GM12878 (cell line): ENCODE measurements at regions of chr22 and their contacts with region 1.

Region 1: DNA sequence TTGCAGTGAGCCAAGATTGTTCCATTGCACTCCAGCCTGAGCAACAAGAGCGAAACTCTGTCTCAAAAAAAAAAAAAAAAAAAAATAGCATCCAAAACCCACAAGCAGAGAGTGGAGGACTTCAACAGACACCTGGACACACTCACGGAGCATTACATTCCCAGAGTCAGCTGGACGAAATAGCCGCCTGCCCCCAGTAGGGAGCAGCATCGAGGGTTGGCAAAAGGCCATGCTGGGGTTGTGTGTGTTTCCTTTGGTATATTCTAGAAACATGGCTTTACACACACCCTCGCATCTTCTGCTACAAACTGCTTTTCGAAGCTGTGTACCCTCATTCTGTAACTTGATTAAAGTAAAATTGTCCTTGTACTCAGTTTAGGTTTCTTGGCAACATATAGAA is 5.3 kb downstream of the ADA2 start:
- DNase-seq: no peak
- ATAC-seq: no peak
- H3K4me3 ChIP-seq: no peak overlapping the region
- H3K27ac ChIP-seq: no peak overlapping the region
- H3K4me1 ChIP-seq: peaks cover 19% of the 10 kb centered on the region
- H3K27me3 ChIP-seq: no peaks in the 10 kb centered on the region
- CTCF ChIP-seq: peak; percentile 35 to 59 (median 42)
- EP300 ChIP-seq: no peak
- POLR2A ChIP-seq: no peak
- RAD21 ChIP-seq: peak; percentile 43; the same call in 1 of the 2 replicates

Region 2: GRCh38 chr22:17228725-17229126 is 14.8 kb after region 1 on chr22:
- CTCF ChIA-PET with region 1: interaction called, 3 read pairs
- POLR2A ChIA-PET with region 1: interaction called, 15 read pairs
- RAD21 ChIA-PET with region 1: interaction called, 3 read pairs
- SMC1A ChIA-PET with region 1: interaction called, 19 read pairs
- in situ Hi-C with region 1: no loop called
- intact Hi-C with region 1: no loop called
- DNase-seq: no peak
- ATAC-seq: peak; percentile 72
- H3K4me3 ChIP-seq: no peak overlapping the region
- H3K27ac ChIP-seq: no peak overlapping the region
- H3K4me1 ChIP-seq: peaks cover 4% of the 10 kb centered on the region; the same call in 1 of the 2 replicates
- H3K27me3 ChIP-seq: no peaks in the 10 kb centered on the region
- CTCF ChIP-seq: no peak
- EP300 ChIP-seq: no peak
- POLR2A ChIP-seq: no peak
- RAD21 ChIP-seq: no peak

Region 3: GRCh38 chr22:17237038-17237668 is 23.2 kb after region 1 on chr22:
- CTCF ChIA-PET with region 1: interaction called, 9 read pairs
- POLR2A ChIA-PET with region 1: no interaction called
- RAD21 ChIA-PET with region 1: interaction called, 7 read pairs
- SMC1A ChIA-PET with region 1: interaction called, 23 read pairs
- in situ Hi-C with region 1: no loop called
- intact Hi-C with region 1: loop called (anchors 2 kb)
- DNase-seq: peak; percentile 71
- ATAC-seq: peak; percentile 92
- H3K4me3 ChIP-seq: peak overlapping the region; percentile 57
- H3K27ac ChIP-seq: peak overlapping the region; percentile 83
- H3K4me1 ChIP-seq: peaks cover 22% of the 10 kb centered on the region
- H3K27me3 ChIP-seq: no peaks in the 10 kb centered on the region
- CTCF ChIP-seq: no peak
- EP300 ChIP-seq: peak; percentile 31 to 55; a peak in 2 of 4 replicates
- POLR2A ChIP-seq: no peak; the same call in 1 of the 2 replicates
- RAD21 ChIP-seq: no peak

Region 4: DNA sequence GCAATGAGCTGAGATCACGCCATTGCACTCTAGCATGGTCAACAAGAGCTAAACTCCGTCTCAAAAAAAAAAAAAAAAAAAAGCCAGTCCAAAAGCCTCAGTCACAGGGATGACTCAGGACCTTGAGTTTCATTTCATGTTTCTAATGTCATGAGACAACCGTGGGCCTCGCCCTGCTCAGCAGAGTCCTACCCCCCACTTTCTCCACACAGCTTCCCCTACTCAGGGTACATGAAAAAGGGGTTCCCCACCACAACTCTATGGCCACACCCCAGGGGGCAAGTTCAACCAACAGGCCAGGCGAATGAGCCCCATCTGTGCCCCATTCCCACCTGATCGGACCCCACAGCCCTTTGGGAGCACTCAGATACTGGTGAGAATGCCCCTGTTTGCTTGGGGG is 29.5 kb after region 1 on chr22:
- CTCF ChIA-PET with region 1: interaction called, 6 read pairs
- POLR2A ChIA-PET with region 1: interaction called, 4 read pairs
- RAD21 ChIA-PET with region 1: interaction called, 11 read pairs
- SMC1A ChIA-PET with region 1: interaction called, 23 read pairs
- in situ Hi-C with region 1: no loop called
- intact Hi-C with region 1: loop called (anchors 2 kb)
- DNase-seq: peak; percentile 84
- ATAC-seq: peak; percentile 97
- H3K4me3 ChIP-seq: no peak overlapping the region
- H3K27ac ChIP-seq: peak overlapping the region; percentile 97
- H3K4me1 ChIP-seq: peaks cover 24% of the 10 kb centered on the region
- H3K27me3 ChIP-seq: no peaks in the 10 kb centered on the region
- CTCF ChIP-seq: no peak
- EP300 ChIP-seq: peak in 1 of 2 experiments; percentile 66; a peak in 2 of 4 replicates
- POLR2A ChIP-seq: 0 out of 2 replicates have a peak, but pooled peaks have one; percentile 34
- RAD21 ChIP-seq: no peak

Region 5: GRCh38 chr22:17258015-17258787 is 44.2 kb after region 1 on chr22:
- CTCF ChIA-PET with region 1: interaction called, 6 read pairs
- POLR2A ChIA-PET with region 1: interaction called, 22 read pairs
- RAD21 ChIA-PET with region 1: interaction called, 27 read pairs
- SMC1A ChIA-PET with region 1: interaction called, 25 read pairs
- in situ Hi-C with region 1: no loop called
- intact Hi-C with region 1: loop called (anchors 1 kb)
- DNase-seq: peak; percentile 98
- ATAC-seq: peak; percentile 96
- H3K4me3 ChIP-seq: 0 out of 2 replicates have a peak overlapping the region, but pooled peaks have one; percentile 28
- H3K27ac ChIP-seq: peak overlapping the region; percentile 81
- H3K4me1 ChIP-seq: peaks cover 24% of the 10 kb centered on the region
- H3K27me3 ChIP-seq: no peaks in the 10 kb centered on the region
- CTCF ChIP-seq: no peak
- EP300 ChIP-seq: peak; percentile 83 to 92
- POLR2A ChIP-seq: no peak
- RAD21 ChIP-seq: peak; percentile 6; the same call in 1 of the 2 replicates

Region 6: DNA sequence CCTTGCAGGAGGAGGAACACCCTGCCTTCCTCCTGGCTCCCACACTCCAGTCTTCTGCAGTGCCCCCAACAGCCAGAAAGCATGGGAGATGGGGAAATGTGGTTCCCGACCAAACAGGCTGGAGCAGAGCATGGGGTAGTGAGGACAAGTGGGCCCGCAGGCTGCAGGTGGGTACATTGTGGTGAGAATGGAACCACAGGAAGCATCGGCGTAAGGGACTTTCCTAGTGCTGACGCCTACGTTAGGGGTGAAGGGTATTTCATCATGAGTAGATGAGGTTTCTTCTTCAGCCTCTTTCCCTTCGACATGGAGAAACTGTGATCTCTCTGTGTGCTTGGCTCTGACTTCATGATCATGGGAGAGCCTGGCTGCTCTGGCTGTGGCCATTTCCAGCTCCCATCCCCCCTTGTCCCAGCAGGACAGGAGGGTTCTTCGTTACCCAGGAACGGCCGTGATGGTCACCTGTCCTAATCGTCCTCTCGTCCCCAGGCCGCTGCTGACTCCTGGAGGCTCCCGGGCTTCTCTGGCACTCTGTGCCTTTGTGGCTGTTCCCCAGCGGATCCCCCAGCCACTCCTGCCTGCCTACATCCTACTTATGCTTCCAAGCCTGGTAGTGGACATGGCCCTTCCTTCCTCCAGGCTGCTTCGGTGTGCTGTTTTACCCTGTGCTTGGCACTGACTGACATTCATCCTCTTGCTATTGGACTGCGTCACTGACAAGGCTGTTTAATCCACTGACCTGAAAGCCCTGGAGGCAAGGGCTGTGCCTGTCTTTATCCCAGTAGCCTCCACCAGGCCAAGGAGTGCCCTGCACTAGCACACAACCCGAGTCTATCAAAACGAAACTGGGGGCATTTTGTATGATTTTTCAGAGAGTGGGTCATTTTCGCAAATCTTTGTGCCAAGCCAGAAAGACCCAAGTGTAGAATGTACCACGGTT is 90.1 kb after region 1 on chr22:
- CTCF ChIA-PET with region 1: interaction called, 8 read pairs
- POLR2A ChIA-PET with region 1: interaction called, 4 read pairs
- RAD21 ChIA-PET with region 1: no interaction called
- SMC1A ChIA-PET with region 1: no interaction called
- in situ Hi-C with region 1: no loop called
- intact Hi-C with region 1: loop called (anchors 5 kb)
- DNase-seq: peak; percentile 77
- ATAC-seq: peak; percentile 96
- H3K4me3 ChIP-seq: no peak overlapping the region
- H3K27ac ChIP-seq: peak overlapping the region; percentile 84
- H3K4me1 ChIP-seq: peaks cover 21% of the 10 kb centered on the region
- H3K27me3 ChIP-seq: no peaks in the 10 kb centered on the region
- CTCF ChIP-seq: no peak
- EP300 ChIP-seq: peak; percentile 33 to 84; a peak in 3 of 4 replicates
- POLR2A ChIP-seq: peak; percentile 47
- RAD21 ChIP-seq: no peak

Region 7: DNA sequence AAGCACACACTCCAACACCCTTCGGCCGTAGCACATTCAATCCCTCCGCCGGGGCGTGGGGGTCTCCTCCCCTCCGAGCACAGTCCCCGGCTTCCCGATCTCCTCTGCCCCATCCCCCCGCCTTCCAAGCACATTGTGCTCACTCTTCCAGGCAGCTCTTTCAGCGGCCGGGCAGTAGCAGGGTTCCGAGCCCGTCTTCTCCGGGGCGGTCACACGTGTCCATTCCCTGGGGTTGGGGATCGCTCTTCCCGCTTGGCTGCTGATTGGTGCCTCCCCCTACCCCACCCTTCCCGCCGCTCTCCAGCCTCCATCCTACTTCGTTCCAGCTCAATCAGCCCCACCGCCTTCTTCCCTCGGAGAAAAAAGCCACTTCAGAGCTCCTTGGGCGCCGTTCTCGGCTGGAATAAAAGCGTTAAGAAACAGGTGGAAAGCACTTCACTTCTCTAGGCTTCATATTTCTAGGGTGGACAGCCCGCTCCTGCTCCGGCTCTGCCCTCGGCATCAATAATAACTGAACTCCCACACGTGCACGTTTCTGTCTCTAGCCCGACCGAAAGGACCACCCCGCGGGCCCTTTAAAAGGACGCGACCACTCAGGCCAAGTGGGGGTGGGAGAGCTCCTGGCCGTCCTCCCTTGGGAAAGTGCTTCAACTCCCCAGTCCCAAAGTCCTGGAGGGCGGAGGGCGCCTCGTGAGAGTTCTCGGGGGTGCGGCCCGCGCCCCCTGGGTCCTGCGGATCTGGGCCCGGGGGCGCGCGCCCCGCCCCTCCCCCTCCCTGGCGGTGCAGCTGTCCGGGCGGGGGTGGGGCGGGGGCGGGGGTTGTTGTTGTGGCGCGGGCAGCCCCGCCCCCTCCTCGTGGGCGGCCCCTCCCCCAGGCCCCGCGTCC is 154.8 kb after region 1 on chr22:
- CTCF ChIA-PET with region 1: no interaction called
- POLR2A ChIA-PET with region 1: no interaction called
- RAD21 ChIA-PET with region 1: no interaction called
- SMC1A ChIA-PET with region 1: no interaction called
- in situ Hi-C with region 1: no loop called
- intact Hi-C with region 1: loop called (anchors 10 kb)
- DNase-seq: peak; percentile 7
- ATAC-seq: no peak
- H3K4me3 ChIP-seq: 0 out of 2 replicates have a peak overlapping the region, but pooled peaks have one; percentile 27
- H3K27ac ChIP-seq: no peak overlapping the region
- H3K4me1 ChIP-seq: no peaks in the 10 kb centered on the region
- H3K27me3 ChIP-seq: peaks cover 6 to 22% of the 10 kb centered on the region in 2 experiments
- CTCF ChIP-seq: no peak
- EP300 ChIP-seq: no peak
- POLR2A ChIP-seq: no peak
- RAD21 ChIP-seq: no peak

Region 8: DNA sequence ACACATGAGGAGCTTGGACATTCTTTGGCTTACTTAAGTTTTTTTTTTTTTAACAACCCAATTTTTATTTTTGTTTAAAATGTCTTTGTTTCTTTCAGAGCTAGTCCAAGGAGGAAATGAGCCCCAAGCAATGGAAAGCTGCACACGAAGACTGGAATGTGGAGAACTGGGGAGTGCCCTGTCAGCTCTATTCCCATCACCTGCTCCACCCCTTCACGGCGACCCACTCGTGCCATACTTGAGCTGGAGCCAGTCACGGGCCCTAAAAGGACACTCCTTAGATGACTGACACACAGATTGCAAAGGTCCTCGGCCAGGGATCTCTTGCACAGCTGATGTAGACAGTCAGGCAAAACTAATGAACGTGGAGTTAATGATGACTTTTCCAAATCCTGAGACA is 338.8 kb after region 1 on chr22:
- CTCF ChIA-PET with region 1: no interaction called
- POLR2A ChIA-PET with region 1: no interaction called
- RAD21 ChIA-PET with region 1: no interaction called
- SMC1A ChIA-PET with region 1: no interaction called
- in situ Hi-C with region 1: no loop called
- intact Hi-C with region 1: no loop called
- DNase-seq: no peak
- ATAC-seq: no peak
- H3K4me3 ChIP-seq: no peak overlapping the region
- H3K27ac ChIP-seq: no peak overlapping the region
- H3K4me1 ChIP-seq: no peaks in the 10 kb centered on the region
- H3K27me3 ChIP-seq: no peaks in the 10 kb centered on the region
- CTCF ChIP-seq: no peak
- EP300 ChIP-seq: no peak
- POLR2A ChIP-seq: no peak
- RAD21 ChIP-seq: no peak